ENCODE measurements at regions of chr10 and their contacts with region 1.

Region 1: GRCh38 chr10:61153771-61154170 is 209.8 kb upstream of the RHOBTB1 start:
- DNase-seq: no peak
- ATAC-seq: no peak
- H3K4me3 ChIP-seq: no peak overlapping the region
- H3K4me3 Mint-ChIP-seq: no peak overlapping the region
- H3K27ac ChIP-seq: no peak overlapping the region
- H3K27ac Mint-ChIP-seq: no peak overlapping the region
- H3K4me1 ChIP-seq: no peaks in the 10 kb centered on the region
- H3K4me1 Mint-ChIP-seq: no peaks in the 10 kb centered on the region
- H3K27me3 ChIP-seq: no peaks in the 10 kb centered on the region
- H3K27me3 Mint-ChIP-seq: peaks cover 6% of the 10 kb centered on the region
- CTCF ChIP-seq: no peak

Region 2: DNA sequence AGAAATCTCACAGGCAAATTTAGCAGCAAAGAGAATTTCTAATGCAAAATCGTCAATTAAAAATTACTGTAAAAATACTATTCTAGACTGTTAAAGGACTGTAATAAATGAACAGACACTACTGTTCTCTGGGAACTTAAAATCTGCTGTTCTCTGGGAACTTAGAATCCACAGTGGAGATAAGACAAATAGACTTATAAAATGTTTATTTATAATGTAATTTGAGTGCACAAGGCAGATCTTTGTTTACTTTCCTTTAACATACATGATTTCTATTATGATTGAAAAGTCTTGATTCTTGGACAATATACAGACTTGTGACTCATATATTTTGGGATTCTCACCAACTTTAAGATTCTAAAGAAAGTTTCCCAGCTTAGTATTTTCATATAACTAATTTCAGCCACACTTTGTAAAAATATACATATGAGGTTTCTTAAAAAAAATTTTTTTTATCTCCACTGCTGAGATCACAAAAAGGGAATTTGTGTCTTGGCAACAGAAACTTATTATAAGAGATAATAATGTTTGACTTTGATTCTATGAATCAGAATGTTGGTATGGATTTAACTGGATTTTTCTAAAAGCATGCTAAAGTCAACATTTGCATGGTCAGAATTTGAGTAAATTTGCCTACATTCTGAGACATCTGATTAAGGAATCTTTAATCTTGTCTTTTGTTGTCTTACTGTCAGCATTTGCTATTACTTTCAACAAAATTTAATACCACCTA is 43.4 kb before region 1 on chr10:
- CTCF ChIA-PET with region 1: no interaction called
- POLR2A ChIA-PET with region 1: no interaction called
- intact Hi-C with region 1: loop called (anchors 5 kb)
- DNase-seq: no peak
- ATAC-seq: no peak
- H3K4me3 ChIP-seq: no peak overlapping the region
- H3K4me3 Mint-ChIP-seq: no peak overlapping the region
- H3K27ac ChIP-seq: no peak overlapping the region
- H3K27ac Mint-ChIP-seq: no peak overlapping the region
- H3K4me1 ChIP-seq: no peaks in the 10 kb centered on the region
- H3K4me1 Mint-ChIP-seq: no peaks in the 10 kb centered on the region
- H3K27me3 ChIP-seq: peaks cover 0 to 4% (median 0%) of the 10 kb centered on the region in 4 experiments
- H3K27me3 Mint-ChIP-seq: peaks cover 22% of the 10 kb centered on the region
- CTCF ChIP-seq: no peak

Region 3: DNA sequence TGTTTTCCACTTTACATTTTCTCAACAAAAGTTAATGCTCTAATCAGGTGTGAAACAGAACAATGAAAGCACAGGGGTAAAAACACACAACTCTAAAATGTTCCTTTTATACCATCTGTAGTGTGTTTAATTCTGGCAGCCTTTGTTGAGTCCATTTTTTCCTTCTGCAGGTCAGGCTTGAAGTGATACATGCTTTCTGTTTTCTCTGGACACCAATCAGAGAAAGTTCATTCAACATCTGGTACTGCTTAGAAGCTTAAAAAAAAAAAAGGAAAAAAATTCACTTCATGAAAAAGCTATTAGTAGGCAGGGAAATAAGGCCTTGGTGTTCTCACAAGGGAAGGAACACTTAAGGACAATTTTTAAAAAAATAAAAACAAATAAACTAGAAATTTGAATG is 21.5 kb after region 1 on chr10:
- CTCF ChIA-PET with region 1: no interaction called
- POLR2A ChIA-PET with region 1: no interaction called
- intact Hi-C with region 1: no loop called
- DNase-seq: no peak
- ATAC-seq: no peak
- H3K4me3 ChIP-seq: no peak overlapping the region
- H3K4me3 Mint-ChIP-seq: no peak overlapping the region
- H3K27ac ChIP-seq: no peak overlapping the region
- H3K27ac Mint-ChIP-seq: no peak overlapping the region
- H3K4me1 ChIP-seq: no peaks in the 10 kb centered on the region
- H3K4me1 Mint-ChIP-seq: no peaks in the 10 kb centered on the region
- H3K27me3 ChIP-seq: no peaks in the 10 kb centered on the region
- H3K27me3 Mint-ChIP-seq: peaks cover 3% of the 10 kb centered on the region
- CTCF ChIP-seq: no peak

Measured in B cell (primary cell).